ENCODE measurements at regions of chr14 and their contacts with region 1.

Region 1: GRCh38 chr14:61403411-61403810 is 82.0 kb downstream of the PRKCH start:
- DNase-seq: peak; percentile 45
- H3K4me3 Mint-ChIP-seq: peak overlapping the region; percentile 31
- H3K27ac Mint-ChIP-seq: peak overlapping the region; percentile 87
- H3K4me1 Mint-ChIP-seq: peaks cover 79% of the 10 kb centered on the region
- H3K27me3 Mint-ChIP-seq: no peaks in the 10 kb centered on the region

Region 2: DNA sequence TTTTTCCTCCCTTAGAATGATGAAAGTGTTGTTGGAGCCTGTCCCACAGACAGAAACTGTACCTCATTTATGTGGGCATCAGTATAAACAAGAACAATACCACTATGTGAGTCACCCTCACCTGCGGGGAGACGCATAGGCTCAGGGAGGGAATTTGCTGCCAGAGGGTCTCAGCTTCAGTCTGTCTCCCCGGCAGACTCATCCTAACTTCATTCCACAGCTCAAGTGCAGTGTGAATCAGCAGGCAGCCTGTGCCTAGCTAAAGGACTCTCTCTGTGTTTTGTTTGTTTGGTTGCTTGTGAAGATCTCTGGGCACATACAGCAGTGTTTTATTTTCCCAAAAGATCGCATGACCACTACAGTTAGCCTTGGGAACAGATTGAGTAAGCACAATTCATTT is 16.9 kb after region 1 on chr14:
- intact Hi-C with region 1: loop called (anchors 1 kb)
- DNase-seq: no peak
- H3K4me3 Mint-ChIP-seq: peak overlapping the region; percentile 54
- H3K27ac Mint-ChIP-seq: peak overlapping the region; percentile 83
- H3K4me1 Mint-ChIP-seq: peaks cover 20% of the 10 kb centered on the region
- H3K27me3 Mint-ChIP-seq: no peaks in the 10 kb centered on the region

Region 3: GRCh38 chr14:61444215-61444768 is 40.9 kb after region 1 on chr14:
- intact Hi-C with region 1: loop called (anchors 2 kb)
- DNase-seq: peak; percentile 61
- H3K4me3 Mint-ChIP-seq: peak overlapping the region; percentile 67
- H3K27ac Mint-ChIP-seq: peak overlapping the region; percentile 82
- H3K4me1 Mint-ChIP-seq: peaks cover 91% of the 10 kb centered on the region
- H3K27me3 Mint-ChIP-seq: no peaks in the 10 kb centered on the region